Thyroid gland (tissue), 4 donors: ENCODE measurements at regions of chr11 and their contacts with region 1.

Region 1: DNA sequence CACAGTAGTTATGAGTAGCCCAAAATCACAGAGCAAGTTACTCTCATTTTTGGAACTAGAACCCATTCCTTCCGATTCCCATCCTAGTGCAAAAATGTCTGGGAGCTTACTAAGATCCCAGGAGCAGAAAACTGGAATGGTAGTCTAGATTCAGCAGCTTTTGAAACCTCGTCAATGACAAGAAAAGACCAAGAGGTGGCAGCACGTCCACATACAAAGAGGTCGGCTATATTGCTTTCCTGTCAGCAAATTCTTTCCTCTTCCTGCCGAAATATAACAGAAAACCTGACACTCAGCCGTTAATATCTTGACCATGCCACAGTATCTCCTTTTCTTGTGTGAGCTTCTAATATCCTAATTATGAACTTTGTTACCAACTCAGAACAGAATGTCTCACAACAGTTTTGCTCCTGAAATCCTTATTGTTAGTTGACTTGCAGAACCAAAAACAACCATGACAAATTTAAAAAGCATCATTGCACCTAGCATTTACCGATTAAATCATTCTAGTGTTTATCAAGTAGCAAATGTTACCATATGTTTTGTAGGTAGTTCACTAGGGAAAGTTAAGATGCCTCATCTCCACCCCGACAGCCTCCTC is 92.8 kb upstream of the OR9G4 start:
- DNase-seq: peak; percentile 43 to 57
- H3K4me3 ChIP-seq: no peak overlapping the region
- H3K27ac ChIP-seq: no peak overlapping the region
- H3K4me1 ChIP-seq: no peaks in the 10 kb centered on the region
- H3K27me3 ChIP-seq: no peaks in the 10 kb centered on the region
- CTCF ChIP-seq: peak in 5 of 6 experiments; percentile 48 to 82 (median 74)
- POLR2A ChIP-seq: no peak

Region 2: GRCh38 chr11:56642339-56642738 is 199.0 kb before region 1 on chr11 and contains the start of gene OR5AP2:
- intact Hi-C with region 1: no loop called
- DNase-seq: no peak
- H3K4me3 ChIP-seq: no peak within 1 kb of the TSS
- H3K27ac ChIP-seq: no peak within 1 kb of the TSS
- H3K4me1 ChIP-seq: no peaks in the 10 kb centered on the region
- H3K27me3 ChIP-seq: no peaks in the 10 kb centered on the region
- CTCF ChIP-seq: no peak
- POLR2A ChIP-seq: no peak
- total RNA-seq, gene OR5AP2: not detected

Region 3: DNA sequence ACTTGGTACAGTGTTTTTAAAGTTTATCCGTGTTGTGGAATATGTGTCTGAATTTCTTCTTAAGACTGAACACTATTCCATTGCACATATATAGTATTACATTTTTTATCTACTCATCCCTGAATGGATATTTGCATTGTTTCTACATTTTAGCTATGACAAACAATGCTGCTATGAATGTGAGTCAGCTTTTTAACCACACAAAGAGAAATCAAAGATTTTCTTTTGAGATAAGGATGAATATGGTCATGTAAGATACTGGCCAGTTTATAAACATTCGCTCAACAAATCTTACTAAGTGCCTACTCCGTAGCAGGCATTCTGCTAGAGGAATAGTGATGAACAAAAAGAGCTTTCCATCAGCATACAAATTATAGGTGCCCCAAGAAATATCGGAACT is 76.3 kb before region 1 on chr11:
- intact Hi-C with region 1: no loop called
- DNase-seq: no peak
- H3K4me3 ChIP-seq: no peak overlapping the region
- H3K27ac ChIP-seq: no peak overlapping the region
- H3K4me1 ChIP-seq: no peaks in the 10 kb centered on the region
- H3K27me3 ChIP-seq: no peaks in the 10 kb centered on the region
- CTCF ChIP-seq: no peak
- POLR2A ChIP-seq: no peak

Region 4: DNA sequence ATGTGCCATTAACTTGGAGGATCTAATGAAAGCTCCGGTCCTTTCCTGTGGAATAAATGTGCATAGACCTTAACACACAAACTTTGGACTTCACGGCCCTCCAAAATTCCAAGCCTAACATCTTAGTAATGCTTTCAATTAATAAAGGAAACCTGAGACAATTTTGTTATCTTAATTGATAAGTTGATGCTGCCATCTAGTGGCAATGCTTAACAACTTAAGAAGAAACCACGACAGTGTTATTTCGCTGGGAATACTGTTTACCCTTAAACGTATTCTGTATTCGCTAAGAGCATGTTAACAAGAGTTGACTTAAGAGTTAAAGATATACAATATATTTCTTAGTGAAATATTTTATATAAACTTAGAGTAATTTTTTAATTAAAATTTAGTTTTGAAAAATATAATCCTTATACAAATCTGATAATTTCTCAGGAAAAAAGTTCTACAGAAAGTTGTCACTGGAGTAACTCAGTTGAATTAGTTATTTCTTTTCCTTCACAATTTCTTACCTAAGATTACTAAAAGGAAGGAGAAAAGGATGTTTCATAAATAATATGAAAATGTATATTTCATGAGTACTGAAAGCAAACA is 57.8 kb before region 1 on chr11:
- intact Hi-C with region 1: no loop called
- DNase-seq: no peak
- H3K4me3 ChIP-seq: no peak overlapping the region
- H3K27ac ChIP-seq: no peak overlapping the region
- H3K4me1 ChIP-seq: no peaks in the 10 kb centered on the region
- H3K27me3 ChIP-seq: no peaks in the 10 kb centered on the region
- CTCF ChIP-seq: peak in 4 of 6 experiments; percentile 8 to 61 (median 34)
- POLR2A ChIP-seq: no peak

Region 5: GRCh38 chr11:57001674-57002401 is 160.5 kb after region 1 on chr11:
- intact Hi-C with region 1: no loop called
- DNase-seq: no peak
- H3K4me3 ChIP-seq: no peak overlapping the region
- H3K27ac ChIP-seq: no peak overlapping the region
- H3K4me1 ChIP-seq: no peaks in the 10 kb centered on the region
- H3K27me3 ChIP-seq: no peaks in the 10 kb centered on the region
- CTCF ChIP-seq: no peak
- POLR2A ChIP-seq: no peak

Region 6: DNA sequence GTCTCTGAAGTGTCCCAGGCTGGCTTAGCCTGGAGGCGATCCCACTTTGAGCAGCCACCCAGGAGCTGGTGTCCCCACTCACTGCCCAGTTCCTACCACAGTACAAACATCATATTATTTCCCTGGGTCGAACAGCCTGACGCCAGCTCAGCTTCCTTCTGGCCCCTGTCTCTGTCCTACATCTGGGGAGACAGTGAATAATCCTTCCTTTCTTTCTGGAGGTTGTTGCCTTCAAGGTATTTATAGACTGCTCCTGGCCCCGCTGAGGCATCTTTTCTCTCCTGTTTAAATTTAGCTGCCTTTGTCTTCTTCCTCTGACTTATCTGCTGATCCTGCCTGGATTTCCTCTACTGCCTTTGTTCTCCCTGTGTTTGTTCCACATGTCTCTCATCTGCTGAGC is 283.6 kb after region 1 on chr11:
- intact Hi-C with region 1: loop called (anchors 10 kb)
- DNase-seq: no peak
- H3K4me3 ChIP-seq: no peak overlapping the region
- H3K27ac ChIP-seq: no peak overlapping the region
- H3K4me1 ChIP-seq: no peaks in the 10 kb centered on the region
- H3K27me3 ChIP-seq: no peaks in the 10 kb centered on the region
- CTCF ChIP-seq: no peak
- POLR2A ChIP-seq: no peak